Activated CD4-positive, alpha-beta memory T cell treated with anti-CD3 and anti-CD28 coated beads for 36 hours (primary cell): ENCODE measurements at regions of chr6 and their contacts with region 1.

Region 1: DNA sequence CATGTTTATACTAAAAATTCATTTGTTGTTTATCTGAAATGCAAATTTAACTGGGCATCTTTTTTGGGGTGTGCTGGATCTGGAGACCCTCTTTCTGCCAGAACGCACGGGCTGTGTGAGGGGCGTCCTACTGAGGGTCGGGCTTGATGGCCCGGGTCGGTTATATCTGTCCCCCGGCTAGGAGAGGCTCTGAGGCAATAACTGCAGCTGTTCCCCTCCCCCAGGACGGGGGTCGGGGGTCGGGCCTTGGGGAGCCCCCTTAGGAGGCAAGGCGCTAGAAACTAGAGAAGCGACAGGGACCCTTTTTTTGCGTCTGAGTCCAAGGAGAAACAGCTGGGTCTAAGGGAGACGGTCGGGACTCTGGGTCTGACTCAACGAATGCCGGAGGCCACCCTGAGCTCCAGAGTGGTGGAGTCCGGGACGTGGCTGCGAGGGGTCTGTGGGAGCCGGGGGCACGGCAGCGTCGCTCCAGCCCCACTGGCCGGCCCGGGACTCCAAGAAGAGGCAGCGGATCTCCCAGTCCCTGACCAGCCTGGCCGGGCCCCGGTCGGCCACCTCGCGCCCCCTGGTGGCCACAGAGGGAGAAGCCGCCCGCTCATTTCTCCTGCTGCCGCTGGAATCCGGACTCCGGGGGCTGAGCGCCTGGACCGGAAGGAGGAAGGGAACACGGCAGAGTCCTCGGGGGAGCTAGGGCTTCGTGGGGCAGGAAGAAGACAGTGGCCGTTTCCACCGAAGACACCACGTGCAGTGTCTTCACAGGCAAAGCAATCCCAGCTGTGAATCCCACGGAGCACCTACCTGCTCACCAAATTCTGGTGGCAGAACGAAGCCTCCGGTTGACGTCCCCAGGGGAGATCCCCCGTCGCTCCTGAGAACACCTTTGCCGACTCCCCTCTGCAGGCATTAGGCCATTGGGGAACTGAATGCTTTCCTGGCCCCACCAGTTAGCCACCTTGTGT is 24.0 kb upstream of the SCML4 start:
- DNase-seq: peak; percentile 88
- H3K4me3 Mint-ChIP-seq: peak overlapping the region; percentile 75
- H3K27ac Mint-ChIP-seq: no peak overlapping the region
- H3K4me1 Mint-ChIP-seq: peaks cover 27% of the 10 kb centered on the region
- H3K27me3 Mint-ChIP-seq: no peaks in the 10 kb centered on the region

Region 2: DNA sequence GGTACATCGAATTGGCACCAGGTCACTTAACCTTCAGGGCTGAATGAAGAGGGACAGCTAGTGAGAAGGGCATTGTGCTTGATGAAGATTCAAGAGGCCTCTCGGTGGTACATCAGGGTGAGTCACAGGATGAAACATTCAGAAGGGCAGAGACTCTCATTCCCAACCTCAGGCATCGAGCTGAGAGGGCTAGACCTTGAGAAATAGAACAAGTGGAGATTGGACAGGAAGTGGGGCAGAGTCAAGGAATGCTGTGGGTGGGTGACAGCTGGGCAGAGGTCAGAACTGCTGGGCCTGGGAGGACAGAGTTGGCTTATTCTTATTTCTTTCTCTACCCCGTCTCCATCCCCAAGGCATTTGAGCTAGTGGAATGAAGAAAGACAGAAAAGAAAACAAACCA is 150.0 kb before region 1 on chr6:
- CTCF ChIA-PET with region 1: interaction called, 30 read pairs
- POLR2A ChIA-PET with region 1: no interaction called
- intact Hi-C with region 1: no loop called
- DNase-seq: no peak
- H3K4me3 Mint-ChIP-seq: no peak overlapping the region
- H3K27ac Mint-ChIP-seq: no peak overlapping the region
- H3K4me1 Mint-ChIP-seq: peaks cover 14% of the 10 kb centered on the region
- H3K27me3 Mint-ChIP-seq: no peaks in the 10 kb centered on the region

Region 3: DNA sequence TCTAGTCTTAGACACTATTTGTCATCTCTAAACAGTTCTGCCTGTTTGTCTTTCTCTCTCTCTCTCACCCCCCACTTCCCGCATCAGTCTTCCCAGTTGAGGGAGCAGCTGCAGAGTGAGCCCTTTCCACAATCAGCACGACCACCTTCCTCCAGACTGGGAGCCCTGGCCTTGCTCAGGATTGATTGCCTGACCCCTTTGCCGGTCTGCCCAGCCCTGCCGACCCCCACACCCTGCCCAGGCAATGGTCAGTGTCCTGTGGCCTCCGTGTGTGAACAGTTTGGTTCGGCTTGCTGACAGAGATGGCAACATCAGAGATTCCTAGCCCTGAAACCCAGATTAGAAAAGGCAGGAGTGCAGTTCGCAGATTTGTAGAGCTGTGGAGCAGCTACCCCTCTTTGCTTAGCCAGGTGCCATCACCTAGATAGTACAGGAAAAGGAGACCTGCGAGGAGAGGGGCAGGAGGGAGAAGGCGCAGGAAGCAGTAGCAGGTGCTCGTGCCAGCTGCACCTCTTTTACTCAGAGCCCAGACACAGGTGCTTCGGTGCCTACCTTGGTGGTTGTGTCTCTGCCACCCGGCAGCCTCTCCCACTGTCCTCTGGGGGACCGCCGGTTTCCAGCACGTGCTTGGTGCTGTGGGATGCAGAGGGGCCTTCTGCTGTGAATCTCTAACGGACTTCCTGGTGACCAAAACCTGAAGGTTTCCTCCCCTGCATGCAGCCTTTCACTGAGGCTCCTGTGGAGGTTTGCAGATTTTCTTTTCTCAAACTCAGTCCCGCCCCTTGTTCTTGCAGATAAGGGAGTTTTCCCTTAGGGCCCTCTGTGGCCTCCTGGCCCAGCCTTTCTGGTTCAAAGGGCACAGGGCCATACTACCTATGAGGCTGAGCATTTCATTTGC is 116.5 kb before region 1 on chr6:
- CTCF ChIA-PET with region 1: interaction called, 90 read pairs
- POLR2A ChIA-PET with region 1: interaction called, 10 read pairs
- intact Hi-C with region 1: loop called (anchors 1 kb)
- DNase-seq: peak; percentile 47
- H3K4me3 Mint-ChIP-seq: peak overlapping the region; percentile 75
- H3K27ac Mint-ChIP-seq: peak overlapping the region; percentile 74
- H3K4me1 Mint-ChIP-seq: peaks cover 83% of the 10 kb centered on the region
- H3K27me3 Mint-ChIP-seq: no peaks in the 10 kb centered on the region

Region 4: GRCh38 chr6:107793191-107793590 is 54.9 kb before region 1 on chr6:
- CTCF ChIA-PET with region 1: interaction called, 13 read pairs
- POLR2A ChIA-PET with region 1: no interaction called
- intact Hi-C with region 1: no loop called
- DNase-seq: no peak
- H3K4me3 Mint-ChIP-seq: no peak overlapping the region
- H3K27ac Mint-ChIP-seq: peak overlapping the region; percentile 20
- H3K4me1 Mint-ChIP-seq: peaks cover 73% of the 10 kb centered on the region
- H3K27me3 Mint-ChIP-seq: no peaks in the 10 kb centered on the region

Region 5: GRCh38 chr6:107813555-107814194 is 34.4 kb before region 1 on chr6:
- CTCF ChIA-PET with region 1: interaction called, 28 read pairs
- POLR2A ChIA-PET with region 1: no interaction called
- intact Hi-C with region 1: no loop called
- DNase-seq: no peak
- H3K4me3 Mint-ChIP-seq: no peak overlapping the region
- H3K27ac Mint-ChIP-seq: no peak overlapping the region
- H3K4me1 Mint-ChIP-seq: peaks cover 61% of the 10 kb centered on the region
- H3K27me3 Mint-ChIP-seq: no peaks in the 10 kb centered on the region

Region 6: DNA sequence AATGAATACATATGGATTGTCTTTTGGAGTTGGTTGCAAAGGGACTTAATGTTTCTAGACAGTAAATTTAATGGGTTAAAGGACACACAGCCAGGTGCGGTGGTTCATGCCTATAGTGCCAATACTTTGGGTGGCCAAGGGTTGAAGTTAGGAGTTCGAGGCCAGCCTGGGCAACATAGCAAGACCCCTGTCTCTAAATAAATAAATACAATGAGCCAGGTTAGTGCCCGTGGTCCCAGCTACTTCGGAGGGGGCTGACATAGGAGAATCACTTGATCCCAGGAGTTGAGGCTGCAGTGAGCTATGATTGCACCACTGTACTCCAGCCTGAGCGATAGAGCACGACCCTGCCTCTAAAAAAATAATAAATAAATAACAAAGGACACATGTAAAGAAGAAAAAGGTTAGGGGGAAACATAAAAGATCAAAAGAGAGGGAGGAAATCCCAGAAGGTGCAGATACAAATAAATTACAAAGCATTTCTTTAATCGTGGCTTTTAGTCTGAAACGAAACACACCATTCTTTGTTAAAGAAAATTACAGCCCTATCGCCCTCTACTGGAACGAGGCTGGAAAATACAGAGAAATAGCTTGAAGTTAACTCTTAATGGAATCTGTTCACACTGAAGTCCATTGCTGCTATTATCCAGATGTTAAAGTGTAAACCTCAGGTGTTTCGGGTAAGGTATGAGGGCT is 18.6 kb after region 1 on chr6:
- CTCF ChIA-PET with region 1: interaction called, 25 read pairs
- POLR2A ChIA-PET with region 1: no interaction called
- intact Hi-C with region 1: no loop called
- DNase-seq: no peak
- H3K4me3 Mint-ChIP-seq: no peak overlapping the region
- H3K27ac Mint-ChIP-seq: no peak overlapping the region
- H3K4me1 Mint-ChIP-seq: peaks cover 13% of the 10 kb centered on the region
- H3K27me3 Mint-ChIP-seq: no peaks in the 10 kb centered on the region

Region 7: GRCh38 chr6:107877968-107878367 is 29.8 kb after region 1 on chr6:
- CTCF ChIA-PET with region 1: no interaction called
- POLR2A ChIA-PET with region 1: no interaction called
- intact Hi-C with region 1: no loop called
- DNase-seq: no peak
- H3K4me3 Mint-ChIP-seq: no peak overlapping the region
- H3K27ac Mint-ChIP-seq: no peak overlapping the region
- H3K4me1 Mint-ChIP-seq: no peaks in the 10 kb centered on the region
- H3K27me3 Mint-ChIP-seq: no peaks in the 10 kb centered on the region

Region 8: DNA sequence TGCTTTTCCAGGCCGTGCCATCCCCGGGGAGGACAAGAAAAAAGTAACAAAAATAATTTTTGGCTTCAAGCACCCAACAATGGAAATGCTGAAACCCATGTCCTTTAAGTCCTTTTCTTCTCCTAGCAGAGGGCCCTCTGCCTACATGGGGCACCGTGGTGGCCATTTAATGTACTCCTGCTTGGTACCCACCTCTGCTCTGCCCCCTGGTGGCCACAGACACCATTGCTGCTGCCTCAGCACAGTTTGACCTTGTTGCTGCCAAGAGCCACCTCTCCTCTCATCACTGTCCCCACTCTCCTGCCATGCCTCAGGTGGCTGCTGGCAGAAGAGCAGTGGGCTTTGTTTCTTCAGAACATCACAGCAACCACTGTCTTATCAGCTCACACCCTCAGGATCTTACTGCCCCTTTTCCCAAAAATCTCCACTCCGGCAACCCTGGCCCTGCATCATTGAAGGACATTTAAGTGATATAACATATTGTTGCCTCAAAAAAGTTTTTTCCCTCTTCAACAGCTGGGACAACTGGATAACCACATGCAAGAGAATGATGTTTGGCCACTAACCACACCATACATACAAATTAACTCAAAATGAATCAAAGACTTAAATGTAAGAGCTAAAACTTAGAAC is 987.2 kb after region 1 on chr6:
- CTCF ChIA-PET with region 1: no interaction called
- POLR2A ChIA-PET with region 1: no interaction called
- intact Hi-C with region 1: no loop called
- DNase-seq: peak; percentile 91
- H3K4me3 Mint-ChIP-seq: no peak overlapping the region
- H3K27ac Mint-ChIP-seq: no peak overlapping the region
- H3K4me1 Mint-ChIP-seq: peaks cover 13% of the 10 kb centered on the region
- H3K27me3 Mint-ChIP-seq: no peaks in the 10 kb centered on the region